B cell (primary cell): ENCODE measurements at regions of chrX and their contacts with region 1.

Region 1: GRCh38 chrX:73855546-73855945 is 292.5 kb downstream of the CHIC1 start:
- DNase-seq: peak; percentile 61
- ATAC-seq: no peak
- H3K4me3 ChIP-seq: no peak overlapping the region
- H3K4me3 Mint-ChIP-seq: no peak overlapping the region
- H3K27ac ChIP-seq: no peak overlapping the region
- H3K27ac Mint-ChIP-seq: no peak overlapping the region
- H3K4me1 ChIP-seq: no peaks in the 10 kb centered on the region
- H3K4me1 Mint-ChIP-seq: no peaks in the 10 kb centered on the region
- H3K27me3 ChIP-seq: no peaks in the 10 kb centered on the region
- H3K27me3 Mint-ChIP-seq: no peaks in the 10 kb centered on the region
- CTCF ChIP-seq: peak; percentile 65

Region 2: DNA sequence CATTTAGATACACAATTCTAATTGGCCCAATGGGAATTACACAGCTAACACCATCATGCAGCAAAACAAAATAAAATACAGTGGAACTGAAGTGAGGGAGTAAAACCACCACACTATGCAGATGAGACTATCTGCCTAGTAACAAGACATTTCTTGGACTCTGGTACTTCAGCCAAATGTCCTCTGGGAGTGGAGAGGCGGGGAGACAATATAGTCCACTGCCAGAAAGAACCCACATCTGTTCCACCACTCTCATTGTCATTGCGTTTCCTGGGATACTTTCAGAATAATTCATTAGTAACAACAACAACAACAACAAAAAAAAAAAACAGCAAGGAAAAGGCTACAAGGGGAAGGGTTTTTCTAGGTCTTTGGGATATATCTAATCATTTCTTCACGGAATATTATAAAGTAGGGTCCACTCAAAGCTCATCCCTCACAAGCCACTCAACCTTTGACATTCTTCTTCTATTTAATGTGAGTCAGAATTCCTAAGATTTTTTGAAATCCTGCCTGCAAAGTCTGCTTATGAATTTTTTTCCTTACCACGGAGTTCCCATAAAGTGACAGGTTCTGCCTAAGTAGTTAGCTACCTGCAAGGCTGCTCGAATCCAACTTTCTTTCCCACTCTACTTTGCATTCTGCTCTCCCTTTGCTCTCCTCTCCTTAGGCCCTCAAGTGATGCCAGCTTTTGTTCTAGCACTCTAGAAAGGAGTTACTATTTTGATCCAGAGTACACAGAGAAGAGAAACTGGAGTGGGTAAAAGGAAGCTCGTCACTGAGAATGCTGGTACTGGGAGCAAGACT is 38.0 kb before region 1 on chrX:
- CTCF ChIA-PET with region 1: no interaction called
- POLR2A ChIA-PET with region 1: no interaction called
- intact Hi-C with region 1: no loop called
- DNase-seq: no peak
- ATAC-seq: no peak
- H3K4me3 ChIP-seq: no peak overlapping the region
- H3K4me3 Mint-ChIP-seq: no peak overlapping the region
- H3K27ac ChIP-seq: no peak overlapping the region
- H3K27ac Mint-ChIP-seq: no peak overlapping the region
- H3K4me1 ChIP-seq: no peaks in the 10 kb centered on the region
- H3K4me1 Mint-ChIP-seq: no peaks in the 10 kb centered on the region
- H3K27me3 ChIP-seq: no peaks in the 10 kb centered on the region
- H3K27me3 Mint-ChIP-seq: peaks cover 4% of the 10 kb centered on the region
- CTCF ChIP-seq: no peak

Region 3: DNA sequence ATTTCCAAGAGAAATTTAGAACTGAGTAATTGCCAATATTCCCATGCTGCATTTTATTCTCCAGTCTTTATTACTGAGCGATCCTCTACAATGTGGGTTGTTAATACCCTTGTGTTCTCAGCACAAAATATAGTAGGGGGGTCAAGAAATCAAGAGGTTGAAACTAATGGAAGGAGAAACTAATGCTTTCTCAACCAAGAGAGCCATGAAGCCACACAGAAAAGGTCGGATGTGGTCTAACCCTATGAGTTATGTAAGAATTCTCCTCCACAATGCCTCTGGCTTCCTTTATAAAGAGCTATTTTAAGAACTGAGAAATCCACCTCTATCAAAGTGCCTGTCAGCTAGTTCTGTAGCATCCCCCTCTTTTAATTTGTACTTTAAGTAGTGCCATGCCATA is 24.0 kb before region 1 on chrX:
- CTCF ChIA-PET with region 1: no interaction called
- POLR2A ChIA-PET with region 1: no interaction called
- intact Hi-C with region 1: no loop called
- DNase-seq: no peak
- ATAC-seq: no peak
- H3K4me3 ChIP-seq: no peak overlapping the region
- H3K4me3 Mint-ChIP-seq: no peak overlapping the region
- H3K27ac ChIP-seq: no peak overlapping the region
- H3K27ac Mint-ChIP-seq: no peak overlapping the region
- H3K4me1 ChIP-seq: no peaks in the 10 kb centered on the region
- H3K4me1 Mint-ChIP-seq: no peaks in the 10 kb centered on the region
- H3K27me3 ChIP-seq: no peaks in the 10 kb centered on the region
- H3K27me3 Mint-ChIP-seq: peaks cover 4% of the 10 kb centered on the region
- CTCF ChIP-seq: no peak

Region 4: DNA sequence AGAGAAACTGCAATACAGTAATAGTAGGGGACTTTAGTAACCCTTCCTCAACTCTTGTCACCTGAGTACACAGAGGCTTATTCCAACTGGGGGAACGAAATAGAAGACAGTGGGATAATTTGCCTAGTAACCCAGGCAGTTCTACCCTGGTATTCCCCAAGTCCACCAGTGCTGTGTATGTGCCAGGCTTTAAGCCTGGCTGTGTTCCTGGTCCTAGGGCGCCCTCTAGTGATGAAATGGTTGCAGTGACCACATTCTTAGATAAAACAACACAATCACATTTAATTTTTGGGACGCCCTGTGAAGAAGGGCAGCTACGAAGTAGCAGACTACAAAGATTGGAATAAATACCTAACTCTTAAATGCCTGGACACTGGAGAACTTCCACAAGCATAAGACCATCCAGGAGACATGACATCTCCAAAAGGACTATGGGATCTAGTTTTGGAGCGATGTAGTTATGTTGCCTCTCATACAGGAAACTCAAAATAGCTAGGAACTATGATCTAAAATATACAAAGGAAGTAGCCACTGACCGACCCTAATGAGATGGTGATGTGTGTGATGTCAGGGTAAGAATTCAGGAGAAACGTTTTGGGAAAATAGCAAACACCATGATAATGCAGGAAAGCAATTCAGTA is 160.0 kb after region 1 on chrX:
- CTCF ChIA-PET with region 1: interaction called, 13 read pairs
- POLR2A ChIA-PET with region 1: no interaction called
- intact Hi-C with region 1: no loop called
- DNase-seq: peak; percentile 67
- ATAC-seq: no peak
- H3K4me3 ChIP-seq: no peak overlapping the region
- H3K4me3 Mint-ChIP-seq: no peak overlapping the region
- H3K27ac ChIP-seq: no peak overlapping the region
- H3K27ac Mint-ChIP-seq: no peak overlapping the region
- H3K4me1 ChIP-seq: no peaks in the 10 kb centered on the region
- H3K4me1 Mint-ChIP-seq: no peaks in the 10 kb centered on the region
- H3K27me3 ChIP-seq: no peaks in the 10 kb centered on the region
- H3K27me3 Mint-ChIP-seq: no peaks in the 10 kb centered on the region
- CTCF ChIP-seq: peak; percentile 75

Region 5: GRCh38 chrX:74133156-74133796 is 277.7 kb after region 1 on chrX:
- CTCF ChIA-PET with region 1: interaction called, 18 read pairs
- POLR2A ChIA-PET with region 1: no interaction called
- intact Hi-C with region 1: no loop called
- DNase-seq: peak; percentile 49
- ATAC-seq: no peak
- H3K4me3 ChIP-seq: no peak overlapping the region
- H3K4me3 Mint-ChIP-seq: no peak overlapping the region
- H3K27ac ChIP-seq: no peak overlapping the region
- H3K27ac Mint-ChIP-seq: no peak overlapping the region
- H3K4me1 ChIP-seq: no peaks in the 10 kb centered on the region
- H3K4me1 Mint-ChIP-seq: no peaks in the 10 kb centered on the region
- H3K27me3 ChIP-seq: no peaks in the 10 kb centered on the region
- H3K27me3 Mint-ChIP-seq: no peaks in the 10 kb centered on the region
- CTCF ChIP-seq: peak; percentile 72

Region 6: DNA sequence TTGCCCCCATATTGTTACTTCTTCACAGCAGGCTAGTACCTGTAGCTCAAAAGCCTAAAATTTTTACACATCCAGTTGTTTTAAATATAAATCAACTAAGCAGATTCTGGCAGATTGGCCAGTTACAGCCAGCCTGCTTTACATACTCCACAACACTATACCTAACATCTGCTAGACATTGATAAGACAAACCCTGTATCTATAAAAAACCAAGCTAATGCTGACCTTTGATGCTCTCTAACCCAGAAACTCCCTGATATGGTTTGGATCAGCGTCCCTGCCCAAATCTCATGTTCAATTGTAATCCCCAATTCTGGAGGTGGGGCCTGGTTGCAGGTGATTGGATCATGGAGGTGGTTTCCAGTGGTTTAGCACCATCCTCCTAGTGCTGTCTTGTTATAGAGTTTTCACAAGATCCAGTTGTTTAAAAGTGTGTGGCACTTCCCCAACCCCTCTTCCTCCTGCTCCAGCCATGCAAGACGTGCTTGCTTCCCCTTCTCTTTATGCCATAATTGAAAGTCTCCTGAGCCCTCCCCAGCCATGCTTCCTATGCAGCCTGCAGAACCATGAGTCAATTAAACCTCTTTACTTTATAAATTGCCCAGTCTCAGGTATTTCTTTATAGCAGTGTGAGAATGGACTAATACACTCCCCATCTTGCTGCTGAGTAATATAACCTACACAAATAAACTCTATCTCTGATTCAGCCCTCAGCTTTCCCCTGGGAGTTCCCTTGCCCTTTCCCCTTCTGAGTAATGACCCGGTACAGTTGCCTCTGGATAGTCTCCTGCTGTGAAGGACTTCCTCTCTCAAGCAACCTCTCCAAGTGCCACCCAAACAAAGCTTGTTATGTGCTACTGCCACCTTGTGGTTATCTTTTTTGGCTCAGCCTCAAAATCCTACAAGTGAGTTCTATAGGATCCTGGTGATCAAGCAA is 488.1 kb after region 1 on chrX:
- CTCF ChIA-PET with region 1: interaction called, 25 read pairs
- POLR2A ChIA-PET with region 1: no interaction called
- intact Hi-C with region 1: no loop called
- DNase-seq: peak; percentile 61
- ATAC-seq: peak; percentile 65
- H3K4me3 ChIP-seq: no peak overlapping the region
- H3K4me3 Mint-ChIP-seq: no peak overlapping the region
- H3K27ac ChIP-seq: no peak overlapping the region
- H3K27ac Mint-ChIP-seq: no peak overlapping the region
- H3K4me1 ChIP-seq: peaks cover 0 to 7% of the 10 kb centered on the region in 2 donors
- H3K4me1 Mint-ChIP-seq: peaks cover 8% of the 10 kb centered on the region
- H3K27me3 ChIP-seq: no peaks in the 10 kb centered on the region
- H3K27me3 Mint-ChIP-seq: peaks cover 4% of the 10 kb centered on the region
- CTCF ChIP-seq: peak; percentile 65

Region 7: GRCh38 chrX:75181721-75182120 is 1326.2 kb after region 1 on chrX:
- CTCF ChIA-PET with region 1: no interaction called
- POLR2A ChIA-PET with region 1: no interaction called
- intact Hi-C with region 1: no loop called
- DNase-seq: no peak
- ATAC-seq: no peak
- H3K4me3 ChIP-seq: no peak overlapping the region
- H3K4me3 Mint-ChIP-seq: no peak overlapping the region
- H3K27ac ChIP-seq: no peak overlapping the region
- H3K27ac Mint-ChIP-seq: no peak overlapping the region
- H3K4me1 ChIP-seq: no peaks in the 10 kb centered on the region
- H3K4me1 Mint-ChIP-seq: no peaks in the 10 kb centered on the region
- H3K27me3 ChIP-seq: no peaks in the 10 kb centered on the region
- H3K27me3 Mint-ChIP-seq: no peaks in the 10 kb centered on the region
- CTCF ChIP-seq: no peak